Tibial artery (tissue), 4 donors: ENCODE measurements at regions of chr5 and their contacts with region 1.

Region 1: DNA sequence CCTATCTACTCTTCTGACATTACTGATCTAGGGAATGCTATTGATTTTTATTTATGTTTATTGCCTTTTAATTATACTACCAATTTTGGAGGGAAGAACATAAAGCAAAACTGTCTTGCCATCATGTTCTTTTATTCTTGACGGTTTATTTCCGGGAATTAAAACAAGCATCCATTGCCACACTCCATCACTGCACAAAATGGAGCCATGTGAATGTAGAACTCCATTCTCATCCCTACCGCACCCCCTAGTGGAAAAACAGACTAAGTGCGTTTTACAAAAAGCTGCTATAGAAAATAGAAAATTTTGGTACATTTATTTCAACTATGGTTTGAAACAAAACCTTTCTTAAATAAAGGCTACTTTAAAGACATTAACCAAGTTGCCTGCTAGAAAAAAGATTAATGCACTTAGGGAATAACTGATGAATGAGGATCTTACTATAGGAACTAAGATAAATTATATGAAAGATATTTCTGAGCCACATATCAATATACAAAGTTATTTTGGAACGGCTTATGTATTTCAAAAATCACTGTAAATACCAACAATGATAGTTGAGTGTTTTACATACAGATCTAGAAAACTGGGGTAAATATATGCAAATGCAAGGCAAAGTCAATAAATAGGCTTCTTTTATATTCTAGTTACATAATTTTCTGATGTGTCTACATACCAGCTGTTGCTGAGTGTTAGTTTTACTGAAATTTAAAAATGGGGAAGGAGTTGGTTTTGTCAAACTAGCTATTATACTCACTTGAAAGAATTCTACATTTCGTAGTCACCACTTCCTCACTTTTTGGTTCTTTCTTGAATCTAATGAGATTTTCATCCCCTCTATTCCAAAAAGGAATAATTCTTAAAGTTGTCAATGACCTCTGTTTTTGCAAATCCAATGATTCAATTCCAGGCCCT is 26.5 kb downstream of the OXCT1 start:
- DNase-seq: no peak
- H3K4me3 ChIP-seq: no peak overlapping the region
- H3K27ac ChIP-seq: no peak overlapping the region
- H3K4me1 ChIP-seq: peaks cover 0 to 18% (median 0%) of the 10 kb centered on the region in 4 donors
- H3K27me3 ChIP-seq: no peaks in the 10 kb centered on the region
- CTCF ChIP-seq: peak; percentile 72 to 81

Region 2: DNA sequence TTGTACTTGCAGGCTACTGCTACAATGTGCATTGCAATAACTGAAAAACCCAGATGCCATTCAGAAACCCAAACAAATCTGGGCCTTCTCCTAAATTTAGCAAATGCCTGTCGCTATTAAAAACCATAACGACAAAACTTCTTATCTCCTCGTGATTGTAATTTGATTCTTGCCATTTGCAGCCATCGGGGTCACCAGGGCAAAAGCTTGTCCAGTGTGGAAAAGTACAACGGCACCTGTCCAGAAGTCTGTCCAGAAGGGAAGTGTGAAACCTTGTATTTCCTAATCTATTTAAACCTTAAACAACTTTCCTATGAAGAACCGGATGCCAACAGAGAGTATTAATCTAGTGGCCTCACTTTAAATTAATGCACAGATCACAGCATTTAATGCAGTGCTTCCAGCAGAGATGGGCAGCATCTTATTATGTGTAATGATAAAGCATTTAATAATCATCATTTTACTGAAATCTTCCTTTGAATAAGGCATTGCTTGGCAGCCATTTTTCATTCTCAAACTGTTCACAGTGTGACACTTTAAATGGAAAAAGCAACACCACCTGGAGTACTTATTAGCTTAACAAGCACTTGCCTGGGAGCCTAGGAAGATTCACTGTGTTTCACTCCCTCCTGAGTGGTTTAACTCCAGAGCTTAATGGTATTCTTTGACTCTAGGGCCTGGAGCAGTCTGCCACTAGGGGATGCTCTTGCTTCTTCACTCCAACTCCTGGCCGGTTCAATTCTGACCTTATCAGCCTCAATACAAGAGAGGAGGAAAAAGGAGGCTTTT is 939.3 kb before region 1 on chr5:
- intact Hi-C with region 1: loop called (anchors 10 kb)
- DNase-seq: peak; percentile 78 to 79
- H3K4me3 ChIP-seq: no peak overlapping the region
- H3K27ac ChIP-seq: peak overlapping the region; percentile 34 to 60
- H3K4me1 ChIP-seq: peaks cover 0 to 30% (median 6%) of the 10 kb centered on the region in 4 donors
- H3K27me3 ChIP-seq: no peaks in the 10 kb centered on the region
- CTCF ChIP-seq: peak; percentile 89 to 92

Region 3: DNA sequence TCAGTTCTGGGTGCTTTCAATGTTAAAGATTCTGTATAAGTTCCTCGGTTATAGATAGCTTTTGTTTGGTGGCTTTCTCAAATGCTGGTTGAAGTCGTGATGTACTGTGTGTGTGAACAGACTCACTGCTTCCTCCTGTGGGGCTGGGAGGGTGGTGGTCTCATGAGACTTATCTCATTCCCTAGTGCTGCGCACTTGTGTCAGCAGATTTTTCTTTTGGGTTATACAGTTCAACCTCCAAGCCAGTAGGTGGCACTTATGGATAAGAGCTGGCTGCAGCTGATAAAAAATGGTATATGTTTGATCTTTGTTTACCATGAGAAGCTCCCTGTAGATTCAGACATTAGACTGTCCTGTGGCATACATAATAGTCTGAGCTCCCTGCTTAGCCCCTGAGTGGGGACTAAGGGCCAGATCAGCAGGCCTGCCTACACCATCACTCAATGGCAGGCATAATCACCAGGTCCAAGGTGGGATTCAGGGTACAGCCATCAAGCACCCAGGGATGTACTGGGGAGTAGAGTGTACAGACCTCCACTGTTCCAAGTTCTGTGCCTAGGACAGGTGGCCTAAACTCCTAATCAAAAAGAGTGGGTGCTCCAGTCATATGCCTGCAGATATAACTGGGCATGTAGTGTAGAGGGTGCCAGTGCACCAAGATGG is 147.7 kb before region 1 on chr5:
- intact Hi-C with region 1: loop called (anchors 5 kb)
- DNase-seq: no peak
- H3K4me3 ChIP-seq: no peak overlapping the region
- H3K27ac ChIP-seq: no peak overlapping the region
- H3K4me1 ChIP-seq: no peaks in the 10 kb centered on the region
- H3K27me3 ChIP-seq: no peaks in the 10 kb centered on the region
- CTCF ChIP-seq: peak; percentile 38 to 46